IMR-90 (cell line): ENCODE measurements at regions of chr2 and their contacts with region 1.

Region 1: DNA sequence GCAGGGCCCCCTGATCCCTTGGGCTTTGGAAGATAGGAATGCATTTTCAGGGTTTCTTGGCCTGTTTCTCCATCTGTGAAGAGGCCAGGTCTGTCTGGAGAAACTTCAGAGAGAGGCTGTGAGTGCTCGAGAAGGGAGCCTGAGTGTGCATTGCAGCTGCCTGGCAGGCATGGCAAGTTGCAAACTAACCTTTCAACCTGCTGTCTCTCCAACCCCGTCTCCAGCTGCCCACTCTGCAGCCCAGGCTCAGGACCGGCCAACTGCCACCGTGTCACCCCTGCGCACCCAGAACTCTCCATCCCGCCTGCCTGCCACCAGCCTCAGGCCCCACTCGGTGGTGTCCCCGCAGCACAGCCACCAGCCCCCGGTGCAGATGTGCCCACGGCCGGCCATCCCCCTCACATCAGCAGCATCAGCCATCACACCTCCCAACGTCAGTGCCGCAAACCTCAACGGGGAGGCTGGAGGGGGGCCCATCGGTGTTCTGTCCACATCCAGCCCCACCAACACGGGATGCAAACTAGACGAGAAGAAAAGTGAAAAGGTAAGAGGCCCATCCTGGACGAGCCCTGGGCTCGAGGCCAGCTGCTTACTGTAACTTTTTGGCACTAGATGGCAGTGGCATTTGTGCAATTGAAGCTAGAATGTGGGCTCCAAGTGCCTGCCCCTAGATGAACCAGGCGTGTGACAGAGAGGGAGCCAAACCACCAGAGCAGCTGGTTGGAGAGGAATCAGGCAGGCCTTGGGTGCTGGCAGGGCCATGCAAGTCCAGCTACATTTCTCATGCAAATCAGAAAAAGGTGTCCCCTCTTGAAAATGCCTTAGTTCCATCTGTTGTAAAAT is 164.6 kb downstream of the SEPTIN10 start:
- DNase-seq: no peak
- ATAC-seq: no peak
- H3K4me3 ChIP-seq: no peak overlapping the region
- H3K27ac ChIP-seq: no peak overlapping the region
- H3K4me1 ChIP-seq: peaks cover 12% of the 10 kb centered on the region
- H3K27me3 ChIP-seq: no peaks in the 10 kb centered on the region
- CTCF ChIP-seq: no peak
- POLR2A ChIP-seq: no peak
- RAD21 ChIP-seq: no peak

Region 2: DNA sequence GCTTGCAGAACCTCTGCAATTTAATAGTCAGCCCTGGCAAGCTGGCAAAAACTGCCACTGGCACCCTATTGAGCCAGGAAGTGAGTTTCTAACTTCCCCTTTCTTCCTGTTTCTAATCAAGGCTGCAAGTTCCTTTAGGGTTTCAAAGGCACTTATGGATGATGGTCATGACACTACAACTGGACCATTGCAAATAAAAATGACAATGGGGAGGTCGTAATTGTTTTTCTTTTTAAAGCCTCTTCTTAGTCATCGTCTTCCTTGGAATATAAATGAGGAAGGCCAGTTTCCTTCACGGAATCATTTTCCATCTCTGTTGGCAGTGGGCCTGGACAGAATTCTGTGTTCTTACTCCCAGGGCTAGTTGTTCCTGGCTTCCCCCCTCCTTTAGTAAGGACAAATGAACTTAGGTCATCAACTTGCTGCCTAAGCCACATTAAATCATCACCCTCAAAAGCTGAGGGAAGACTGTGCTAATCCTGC is 284.4 kb before region 1 on chr2:
- CTCF ChIA-PET with region 1: no interaction called
- POLR2A ChIA-PET with region 1: no interaction called
- dilution Hi-C with region 1: no loop called
- in situ Hi-C with region 1: no loop called
- intact Hi-C with region 1: loop called (anchors 5 kb)
- DNase-seq: peak; percentile 78
- ATAC-seq: peak; percentile 30; the same call in 1 of the 2 replicates
- H3K4me3 ChIP-seq: no peak overlapping the region
- H3K27ac ChIP-seq: peak overlapping the region; percentile 72
- H3K4me1 ChIP-seq: peaks cover 30% of the 10 kb centered on the region
- H3K27me3 ChIP-seq: no peaks in the 10 kb centered on the region
- CTCF ChIP-seq: no peak
- POLR2A ChIP-seq: no peak
- RAD21 ChIP-seq: no peak

Region 3: DNA sequence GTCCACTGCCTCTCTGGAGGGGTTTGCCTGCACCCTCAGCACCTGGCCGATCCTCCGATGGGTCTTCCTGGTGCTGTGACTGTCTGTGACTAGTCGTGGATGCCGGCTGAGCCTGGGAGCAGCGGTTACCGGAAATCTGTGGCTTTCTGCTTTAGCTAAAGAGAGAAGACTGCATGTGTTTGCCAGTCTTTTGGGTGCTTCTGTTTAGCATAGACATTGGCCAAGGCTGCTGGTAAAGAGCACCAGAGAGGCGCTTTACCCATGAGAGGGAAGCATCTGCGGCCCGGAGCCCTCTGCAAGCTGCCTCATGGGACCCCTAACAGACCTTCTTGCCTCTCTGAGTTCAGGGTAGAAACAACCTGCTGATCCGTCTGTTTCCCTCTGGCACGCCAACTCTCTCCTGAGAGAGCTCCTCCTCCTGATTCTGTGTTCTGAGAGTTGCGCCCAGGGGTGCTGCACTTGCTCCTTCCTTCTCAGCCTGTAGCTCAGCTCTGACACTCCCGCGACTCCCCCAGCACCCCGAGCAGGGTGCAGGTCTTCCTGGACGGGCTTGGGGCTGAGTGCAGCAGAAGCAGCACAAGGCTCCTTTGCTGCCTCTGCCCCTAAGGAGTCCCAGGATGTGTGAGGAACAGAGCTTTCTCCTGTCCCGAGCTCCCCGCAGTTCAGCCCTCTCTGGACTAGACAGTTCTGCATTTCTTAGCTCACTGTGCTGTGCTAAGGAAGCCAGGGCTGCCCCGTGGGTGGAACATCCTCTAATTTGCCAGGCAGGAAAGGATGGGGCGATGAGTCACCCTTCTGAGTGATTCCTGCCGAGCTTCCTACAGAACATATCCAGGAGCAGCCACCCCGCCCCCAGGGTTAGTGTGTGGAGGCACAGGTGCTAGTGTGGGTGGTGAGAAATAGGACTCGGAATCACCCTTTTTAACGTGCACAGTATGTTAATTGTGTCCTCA is 117.0 kb before region 1 on chr2:
- CTCF ChIA-PET with region 1: no interaction called
- POLR2A ChIA-PET with region 1: no interaction called
- dilution Hi-C with region 1: no loop called
- in situ Hi-C with region 1: no loop called
- intact Hi-C with region 1: loop called (anchors 5 kb)
- DNase-seq: peak; percentile 96
- ATAC-seq: peak; percentile 84
- H3K4me3 ChIP-seq: no peak overlapping the region
- H3K27ac ChIP-seq: peak overlapping the region; percentile 87
- H3K4me1 ChIP-seq: peaks cover 46% of the 10 kb centered on the region
- H3K27me3 ChIP-seq: no peaks in the 10 kb centered on the region
- CTCF ChIP-seq: no peak
- POLR2A ChIP-seq: peak; percentile 74
- RAD21 ChIP-seq: peak; percentile 33; the same call in 1 of the 2 replicates

Region 4: GRCh38 chr2:109425411-109425810 is 23.8 kb before region 1 on chr2:
- CTCF ChIA-PET with region 1: no interaction called
- POLR2A ChIA-PET with region 1: interaction called, 13 read pairs
- dilution Hi-C with region 1: no loop called
- in situ Hi-C with region 1: no loop called
- intact Hi-C with region 1: no loop called
- DNase-seq: no peak
- ATAC-seq: no peak
- H3K4me3 ChIP-seq: no peak overlapping the region
- H3K27ac ChIP-seq: no peak overlapping the region
- H3K4me1 ChIP-seq: peaks cover 11% of the 10 kb centered on the region
- H3K27me3 ChIP-seq: no peaks in the 10 kb centered on the region
- CTCF ChIP-seq: no peak
- POLR2A ChIP-seq: no peak
- RAD21 ChIP-seq: no peak

Region 5: DNA sequence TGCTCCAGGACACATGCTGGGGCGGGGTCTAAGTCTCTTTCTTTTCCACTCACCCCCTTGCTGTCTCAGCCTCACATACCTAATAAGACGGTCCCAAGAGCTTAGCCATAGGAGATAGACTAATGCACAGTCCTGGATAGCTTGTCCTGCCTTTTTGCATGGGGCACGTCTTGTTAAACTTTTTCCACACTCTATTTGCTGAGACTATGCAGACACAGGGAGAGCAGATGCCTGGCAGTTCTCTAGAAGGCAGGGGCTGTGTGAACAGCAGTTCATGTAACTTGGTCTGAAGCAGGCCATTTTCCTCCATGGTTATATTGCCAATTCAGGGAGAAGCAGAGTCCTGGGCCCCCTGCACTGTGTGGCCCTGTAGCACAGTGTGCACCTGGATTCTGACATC is 22.5 kb after region 1 on chr2:
- CTCF ChIA-PET with region 1: no interaction called
- POLR2A ChIA-PET with region 1: no interaction called
- dilution Hi-C with region 1: no loop called
- in situ Hi-C with region 1: no loop called
- intact Hi-C with region 1: loop called (anchors 2 kb)
- DNase-seq: no peak
- ATAC-seq: no peak
- H3K4me3 ChIP-seq: no peak overlapping the region
- H3K27ac ChIP-seq: no peak overlapping the region
- H3K4me1 ChIP-seq: peaks cover 18% of the 10 kb centered on the region
- H3K27me3 ChIP-seq: no peaks in the 10 kb centered on the region
- CTCF ChIP-seq: no peak
- POLR2A ChIP-seq: no peak
- RAD21 ChIP-seq: no peak

Region 6: GRCh38 chr2:109486711-109487535 is 37.8 kb after region 1 on chr2:
- CTCF ChIA-PET with region 1: no interaction called
- POLR2A ChIA-PET with region 1: no interaction called
- dilution Hi-C with region 1: no loop called
- in situ Hi-C with region 1: no loop called
- intact Hi-C with region 1: loop called (anchors 1 kb)
- DNase-seq: peak; percentile 95
- ATAC-seq: peak; percentile 93
- H3K4me3 ChIP-seq: no peak overlapping the region
- H3K27ac ChIP-seq: peak overlapping the region; percentile 87
- H3K4me1 ChIP-seq: peaks cover 35% of the 10 kb centered on the region
- H3K27me3 ChIP-seq: no peaks in the 10 kb centered on the region
- CTCF ChIP-seq: no peak
- POLR2A ChIP-seq: no peak
- RAD21 ChIP-seq: no peak

Region 7: GRCh38 chr2:109594246-109594885 is 145.2 kb after region 1 on chr2:
- CTCF ChIA-PET with region 1: no interaction called
- POLR2A ChIA-PET with region 1: no interaction called
- dilution Hi-C with region 1: no loop called
- in situ Hi-C with region 1: no loop called
- intact Hi-C with region 1: no loop called
- DNase-seq: peak; percentile 53
- ATAC-seq: peak; percentile 66
- H3K4me3 ChIP-seq: no peak overlapping the region
- H3K27ac ChIP-seq: no peak overlapping the region
- H3K4me1 ChIP-seq: peaks cover 3% of the 10 kb centered on the region
- H3K27me3 ChIP-seq: no peaks in the 10 kb centered on the region
- CTCF ChIP-seq: no peak
- POLR2A ChIP-seq: no peak
- RAD21 ChIP-seq: no peak